ENCODE measurements at regions of chr2 and their contacts with region 1.

Region 1: DNA sequence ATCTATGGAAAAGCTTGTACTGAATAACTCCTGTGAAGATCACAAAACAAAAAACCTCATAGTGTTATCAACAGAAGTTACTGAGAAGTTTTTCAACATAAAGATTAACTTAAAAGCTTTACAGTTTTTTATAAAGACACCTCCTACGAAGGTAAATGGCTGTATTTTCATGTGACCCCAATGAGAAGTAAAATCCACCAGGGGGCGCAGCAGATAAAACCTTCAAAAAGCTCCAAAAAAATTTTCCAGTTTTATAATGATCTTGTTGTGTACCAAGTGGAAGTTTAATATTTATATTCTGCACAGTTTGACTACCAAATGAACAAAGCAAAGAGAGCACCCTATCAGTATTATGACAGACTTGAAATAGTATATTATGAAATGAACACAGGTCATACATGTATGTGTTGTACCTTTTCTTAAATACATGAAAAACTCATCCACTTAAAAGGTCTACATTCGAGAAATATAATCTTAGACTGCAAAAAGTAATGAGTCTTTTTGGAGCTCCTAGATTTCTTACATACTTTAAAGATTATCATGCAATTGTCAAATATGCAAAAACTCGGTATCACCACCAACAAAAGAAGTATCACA is 38.5 kb downstream of the PNO1 start:
- DNase-seq: peak; percentile 30 to 33 (median 31)
- H3K4me3 ChIP-seq: no peak overlapping the region
- H3K4me3 Mint-ChIP-seq: no peak overlapping the region
- H3K27ac ChIP-seq: no peak overlapping the region
- H3K27ac Mint-ChIP-seq: peak overlapping the region in 2 of 7 donors; percentile 15 to 54
- H3K4me1 ChIP-seq: peaks cover 10 to 24% of the 10 kb centered on the region in 2 donors
- H3K4me1 Mint-ChIP-seq: peaks cover 36% of the 10 kb centered on the region
- H3K27me3 ChIP-seq: no peaks in the 10 kb centered on the region
- H3K27me3 Mint-ChIP-seq: no peaks in the 10 kb centered on the region
- CTCF ChIP-seq: peak; percentile 96

Region 2: GRCh38 chr2:68214381-68214780 is 18.2 kb after region 1 on chr2:
- intact Hi-C with region 1: no loop called
- DNase-seq: no peak
- H3K4me3 ChIP-seq: no peak overlapping the region
- H3K4me3 Mint-ChIP-seq: no peak overlapping the region
- H3K27ac ChIP-seq: no peak overlapping the region
- H3K27ac Mint-ChIP-seq: no peak overlapping the region
- H3K4me1 ChIP-seq: no peaks in the 10 kb centered on the region
- H3K4me1 Mint-ChIP-seq: peaks cover 19% of the 10 kb centered on the region
- H3K27me3 ChIP-seq: no peaks in the 10 kb centered on the region
- H3K27me3 Mint-ChIP-seq: no peaks in the 10 kb centered on the region
- CTCF ChIP-seq: no peak

Region 3: DNA sequence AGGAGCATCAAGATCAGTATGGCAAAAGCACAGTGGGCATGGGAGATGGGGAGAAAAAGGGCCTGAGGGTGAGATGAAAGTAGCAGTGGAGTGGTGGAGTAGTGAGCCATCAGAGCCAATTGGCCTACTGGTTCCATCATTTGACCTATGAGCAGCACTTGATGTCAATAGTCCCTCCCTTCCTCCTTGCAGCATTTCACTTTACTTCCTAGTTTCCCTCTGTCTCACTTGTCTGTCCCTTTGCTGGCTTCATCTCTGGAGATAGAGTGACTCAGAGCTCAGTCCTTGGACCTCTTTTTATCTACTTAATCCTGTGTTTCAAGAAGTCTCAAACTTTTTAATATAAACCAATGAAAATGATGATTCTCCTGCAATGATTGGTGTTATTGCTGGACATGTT is 238.8 kb after region 1 on chr2:
- intact Hi-C with region 1: loop called in 1 of 2 experiments (anchors 10 kb)
- DNase-seq: peak; percentile 53 to 73 (median 67)
- H3K4me3 ChIP-seq: no peak overlapping the region
- H3K4me3 Mint-ChIP-seq: no peak overlapping the region
- H3K27ac ChIP-seq: no peak overlapping the region
- H3K27ac Mint-ChIP-seq: peak overlapping the region; percentile 7 to 85 (median 43)
- H3K4me1 ChIP-seq: peaks cover 22 to 25% of the 10 kb centered on the region in 2 donors
- H3K4me1 Mint-ChIP-seq: peaks cover 30% of the 10 kb centered on the region
- H3K27me3 ChIP-seq: no peaks in the 10 kb centered on the region
- H3K27me3 Mint-ChIP-seq: no peaks in the 10 kb centered on the region
- CTCF ChIP-seq: no peak